Endothelial cell of umbilical vein (primary cell): ENCODE measurements at regions of chr7 and their contacts with region 1.

Region 1: DNA sequence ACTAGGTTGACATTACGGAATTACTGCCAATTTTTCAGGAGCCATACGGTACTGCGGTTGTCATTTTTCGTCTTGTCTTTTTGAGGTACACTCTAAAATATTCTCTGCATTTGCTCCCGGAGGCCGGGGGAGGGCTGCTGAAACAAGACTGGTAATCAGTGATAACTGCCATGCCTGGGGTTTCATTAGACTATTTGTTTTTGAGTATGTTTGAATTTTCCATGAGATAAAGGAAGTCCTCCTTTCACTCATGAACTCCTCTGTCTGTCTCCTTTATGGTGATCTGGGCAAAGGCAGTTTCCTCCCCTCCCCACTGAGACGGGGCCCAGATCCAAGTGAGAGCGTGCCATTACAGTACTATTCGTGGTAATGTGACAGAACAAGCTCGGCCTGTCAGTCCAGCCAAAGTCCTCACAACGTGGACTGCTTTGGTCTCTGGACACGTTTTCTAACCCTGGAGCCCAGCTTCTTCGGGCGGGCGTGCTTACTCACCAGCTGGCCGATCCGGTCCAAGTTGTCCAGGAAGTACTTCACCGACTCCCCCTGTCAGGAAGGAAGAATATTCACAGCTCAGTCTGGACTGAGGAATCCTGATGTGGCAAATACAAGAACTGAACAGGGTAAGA is 45.1 kb downstream of the AMZ1 start:
- DNase-seq: peak; percentile 81
- H3K4me3 ChIP-seq: no peak overlapping the region
- H3K27ac ChIP-seq: peak overlapping the region; percentile 54
- H3K4me1 ChIP-seq: peaks cover 33% of the 10 kb centered on the region
- H3K27me3 ChIP-seq: no peaks in the 10 kb centered on the region
- CTCF ChIP-seq: no peak
- POLR2A ChIP-seq: no peak

Region 2: DNA sequence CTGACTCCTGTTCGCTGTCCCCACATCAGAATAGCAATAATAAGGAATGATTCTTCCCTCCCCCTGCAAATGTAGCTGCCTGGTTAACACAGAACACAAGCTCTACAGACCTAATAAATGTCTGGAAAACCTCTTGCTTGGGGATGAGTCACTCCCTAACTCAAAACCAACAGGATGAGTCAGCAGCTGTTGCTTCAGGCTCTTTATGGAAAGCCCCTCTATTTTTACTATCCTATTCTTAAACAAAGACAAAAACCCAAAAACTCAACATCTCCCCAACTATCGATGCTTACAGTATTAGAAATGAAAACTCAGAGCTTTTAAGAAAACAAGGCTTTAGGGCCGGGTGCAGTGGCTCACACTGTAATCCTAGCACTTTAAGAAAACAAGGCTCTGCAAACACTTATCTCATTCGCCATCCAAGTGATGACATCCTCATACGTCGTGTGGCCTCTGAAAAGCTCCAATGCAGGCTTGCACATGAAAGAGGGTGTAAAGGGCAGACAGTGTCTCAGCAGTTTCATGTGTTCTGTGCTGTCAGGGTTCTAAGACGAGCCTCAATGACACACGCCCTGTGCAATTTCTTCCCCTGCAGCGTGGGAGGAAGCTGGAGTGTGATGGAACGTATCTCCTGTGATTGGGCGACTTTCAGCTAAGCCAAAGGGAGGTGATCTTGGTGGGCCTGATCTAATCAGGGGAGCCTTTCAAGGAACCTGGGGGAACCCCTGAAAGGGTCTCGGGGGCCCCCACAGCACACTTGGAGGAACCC is 25.0 kb after region 1 on chr7:
- CTCF ChIA-PET with region 1: interaction called, 9 read pairs
- POLR2A ChIA-PET with region 1: interaction called, 4 read pairs
- dilution Hi-C with region 1: no loop called
- intact Hi-C with region 1: loop called (anchors 2 kb)
- DNase-seq: peak; percentile 93
- H3K4me3 ChIP-seq: peak overlapping the region in 1 of 3 experiments; percentile 20
- H3K27ac ChIP-seq: peak overlapping the region; percentile 81
- H3K4me1 ChIP-seq: peaks cover 27% of the 10 kb centered on the region
- H3K27me3 ChIP-seq: no peaks in the 10 kb centered on the region
- CTCF ChIP-seq: no peak
- POLR2A ChIP-seq: no peak

Region 3: DNA sequence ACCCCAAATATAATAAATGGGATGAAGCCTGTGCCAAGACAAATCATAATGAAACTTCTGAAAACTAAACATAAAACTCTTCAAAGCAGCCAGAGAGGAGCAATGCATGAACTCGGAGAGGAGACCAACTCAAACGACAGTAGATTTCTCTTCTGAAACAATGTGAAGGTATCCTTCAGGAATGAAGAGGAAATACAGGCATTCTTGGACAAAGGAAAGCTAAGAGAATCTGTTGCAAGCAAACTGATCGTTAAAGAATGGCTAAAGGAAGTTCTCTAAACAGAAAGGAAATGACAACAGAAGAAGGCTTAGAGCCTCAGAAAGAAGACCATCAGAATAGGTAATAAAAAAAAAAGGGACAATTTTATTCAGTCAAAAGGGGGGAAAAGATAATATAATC is 104.4 kb after region 1 on chr7:
- CTCF ChIA-PET with region 1: no interaction called
- POLR2A ChIA-PET with region 1: no interaction called
- dilution Hi-C with region 1: no loop called
- intact Hi-C with region 1: loop called (anchors 2 kb)
- DNase-seq: peak; percentile 68
- H3K4me3 ChIP-seq: peak overlapping the region in 1 of 3 experiments; percentile 48
- H3K27ac ChIP-seq: peak overlapping the region; percentile 83
- H3K4me1 ChIP-seq: peaks cover 18% of the 10 kb centered on the region
- H3K27me3 ChIP-seq: no peaks in the 10 kb centered on the region
- CTCF ChIP-seq: no peak
- POLR2A ChIP-seq: no peak

Region 4: GRCh38 chr7:2844165-2844898 is 111.3 kb after region 1 on chr7 and contains the start of gene GNA12:
- CTCF ChIA-PET with region 1: no interaction called
- POLR2A ChIA-PET with region 1: no interaction called
- dilution Hi-C with region 1: no loop called
- intact Hi-C with region 1: loop called (anchors 2 kb)
- DNase-seq: peak; percentile 100
- H3K4me3 ChIP-seq: peak within 1 kb of the TSS; percentile 57 to 89 (median 61)
- H3K27ac ChIP-seq: no peak within 1 kb of the TSS
- H3K4me1 ChIP-seq: peaks cover 2% of the 10 kb centered on the region
- H3K27me3 ChIP-seq: no peaks in the 10 kb centered on the region
- CTCF ChIP-seq: no peak
- POLR2A ChIP-seq: peak; percentile 30
- total RNA-seq, gene GNA12: 56.0 and 63.0 TPM in 2 replicates

Region 5: GRCh38 chr7:3282457-3282856 is 549.4 kb after region 1 on chr7:
- CTCF ChIA-PET with region 1: no interaction called
- POLR2A ChIA-PET with region 1: no interaction called
- dilution Hi-C with region 1: no loop called
- intact Hi-C with region 1: no loop called
- DNase-seq: no peak
- H3K4me3 ChIP-seq: no peak overlapping the region
- H3K27ac ChIP-seq: no peak overlapping the region
- H3K4me1 ChIP-seq: no peaks in the 10 kb centered on the region
- H3K27me3 ChIP-seq: no peaks in the 10 kb centered on the region
- CTCF ChIP-seq: no peak
- POLR2A ChIP-seq: no peak